ENCODE measurements at regions of chrX and their contacts with region 1.

Region 1: GRCh38 chrX:134908356-134908755 is 82.4 kb upstream of the SMIM10 start:
- DNase-seq: peak in 4 of 5 donors; percentile 24 to 39 (median 32)
- H3K4me3 ChIP-seq: no peak overlapping the region
- H3K4me3 Mint-ChIP-seq: no peak overlapping the region
- H3K27ac ChIP-seq: no peak overlapping the region
- H3K27ac Mint-ChIP-seq: peak overlapping the region in 4 of 7 donors; percentile 13 to 85 (median 77)
- H3K4me1 ChIP-seq: no peaks in the 10 kb centered on the region
- H3K4me1 Mint-ChIP-seq: peaks cover 5 to 7% (median 6%) of the 10 kb centered on the region in 4 donors
- H3K27me3 ChIP-seq: no peaks in the 10 kb centered on the region
- H3K27me3 Mint-ChIP-seq: no peaks in the 10 kb centered on the region

Region 2: GRCh38 chrX:134782796-134783195 is 125.6 kb before region 1 on chrX:
- CTCF ChIA-PET with region 1: no interaction called
- POLR2A ChIA-PET with region 1: no interaction called
- intact Hi-C with region 1: loop called (anchors 2 kb)
- DNase-seq: peak in 1 of 5 donors; percentile 8
- H3K4me3 ChIP-seq: no peak overlapping the region
- H3K4me3 Mint-ChIP-seq: no peak overlapping the region
- H3K27ac ChIP-seq: no peak overlapping the region
- H3K27ac Mint-ChIP-seq: no peak overlapping the region
- H3K4me1 ChIP-seq: no peaks in the 10 kb centered on the region
- H3K4me1 Mint-ChIP-seq: no peaks in the 10 kb centered on the region
- H3K27me3 ChIP-seq: no peaks in the 10 kb centered on the region
- H3K27me3 Mint-ChIP-seq: no peaks in the 10 kb centered on the region

Measured in CD4-positive, alpha-beta memory T cell (primary cell).